ENCODE measurements at regions of chr4 and their contacts with region 1.

Region 1: GRCh38 chr4:182938205-182938645 is 21.0 kb upstream of the DCTD start:
- DNase-seq: peak; percentile 77
- H3K4me3 Mint-ChIP-seq: no peak overlapping the region
- H3K27ac Mint-ChIP-seq: no peak overlapping the region
- H3K4me1 Mint-ChIP-seq: peaks cover 17% of the 10 kb centered on the region
- H3K27me3 Mint-ChIP-seq: peaks cover 19% of the 10 kb centered on the region
- CTCF ChIP-seq: peak; percentile 95

Region 2: DNA sequence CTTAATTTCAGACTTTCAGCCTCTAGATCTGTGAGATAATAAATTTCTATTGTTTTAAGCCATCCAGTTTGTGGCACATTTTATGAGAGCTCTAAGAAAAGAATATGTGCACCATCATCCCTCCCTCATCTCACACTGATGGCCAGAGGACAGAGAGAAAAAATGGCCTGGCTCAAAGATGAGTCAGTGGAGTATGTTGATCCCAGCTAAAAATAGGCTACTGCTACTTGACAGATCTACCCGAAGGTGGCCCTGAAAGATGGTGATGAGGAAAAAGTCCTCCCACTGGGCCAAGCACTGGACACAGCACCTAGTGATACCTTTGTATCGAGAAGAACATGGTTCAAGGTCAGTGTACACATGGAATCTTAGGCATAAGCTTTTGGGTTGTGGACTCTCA is 17.2 kb after region 1 on chr4:
- CTCF ChIA-PET with region 1: interaction called, 57 read pairs
- POLR2A ChIA-PET with region 1: no interaction called
- intact Hi-C with region 1: no loop called
- DNase-seq: no peak
- H3K4me3 Mint-ChIP-seq: no peak overlapping the region
- H3K27ac Mint-ChIP-seq: no peak overlapping the region
- H3K4me1 Mint-ChIP-seq: no peaks in the 10 kb centered on the region
- H3K27me3 Mint-ChIP-seq: no peaks in the 10 kb centered on the region
- CTCF ChIP-seq: no peak

Region 3: DNA sequence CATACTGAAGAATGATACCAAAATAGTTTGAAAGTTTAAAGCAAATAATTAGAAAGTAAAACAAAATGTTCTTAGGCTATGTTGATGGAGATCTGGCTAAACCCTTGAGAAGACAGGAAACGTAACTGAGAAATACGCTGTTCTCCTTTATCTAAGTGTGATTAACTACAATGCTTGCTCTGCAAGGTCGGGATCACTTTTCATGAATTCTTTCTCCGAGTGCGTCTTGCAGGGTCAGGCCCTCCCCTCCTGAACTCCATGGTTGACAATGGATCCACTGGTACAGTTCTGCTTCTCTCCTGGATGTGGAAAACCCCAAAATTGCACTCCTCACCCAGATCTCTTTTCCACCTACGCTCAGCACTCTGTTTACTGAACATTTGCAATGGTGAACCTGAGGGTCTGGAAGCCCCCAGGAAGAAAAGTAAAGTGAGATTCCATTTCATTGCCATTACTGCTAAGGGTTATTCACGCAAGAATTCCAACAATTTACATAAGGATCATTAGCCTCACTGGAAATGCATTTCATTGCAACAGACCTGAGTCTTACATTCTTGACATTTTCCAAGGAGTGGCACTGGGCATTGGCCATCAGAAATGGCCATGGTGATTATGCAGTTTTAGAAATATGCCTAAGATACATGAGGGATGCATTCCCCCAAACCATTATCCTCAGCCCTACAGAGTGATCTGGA is 136.2 kb after region 1 on chr4:
- CTCF ChIA-PET with region 1: interaction called, 88 read pairs
- POLR2A ChIA-PET with region 1: no interaction called
- intact Hi-C with region 1: loop called (anchors 1 kb)
- DNase-seq: no peak
- H3K4me3 Mint-ChIP-seq: no peak overlapping the region
- H3K27ac Mint-ChIP-seq: no peak overlapping the region
- H3K4me1 Mint-ChIP-seq: no peaks in the 10 kb centered on the region
- H3K27me3 Mint-ChIP-seq: no peaks in the 10 kb centered on the region
- CTCF ChIP-seq: no peak

Region 4: DNA sequence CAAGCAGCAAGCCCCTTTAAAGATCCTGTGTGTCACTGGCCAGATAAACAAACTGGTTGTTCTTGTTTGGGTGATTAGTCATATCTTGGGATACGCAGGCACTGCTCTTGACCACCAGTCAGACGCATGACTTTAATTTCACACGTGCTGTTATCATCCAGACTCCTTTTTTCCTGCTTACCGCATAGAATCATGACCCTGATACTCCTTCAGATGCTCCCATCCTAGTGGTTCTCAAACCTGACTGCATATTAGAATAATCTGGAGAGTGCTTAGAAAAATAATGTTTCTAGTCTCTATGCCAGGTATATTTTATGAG is 303.1 kb after region 1 on chr4:
- CTCF ChIA-PET with region 1: interaction called, 18 read pairs
- POLR2A ChIA-PET with region 1: no interaction called
- intact Hi-C with region 1: no loop called
- DNase-seq: peak; percentile 22
- H3K4me3 Mint-ChIP-seq: no peak overlapping the region
- H3K27ac Mint-ChIP-seq: no peak overlapping the region
- H3K4me1 Mint-ChIP-seq: peaks cover 8% of the 10 kb centered on the region
- H3K27me3 Mint-ChIP-seq: no peaks in the 10 kb centered on the region
- CTCF ChIP-seq: no peak

Region 5: DNA sequence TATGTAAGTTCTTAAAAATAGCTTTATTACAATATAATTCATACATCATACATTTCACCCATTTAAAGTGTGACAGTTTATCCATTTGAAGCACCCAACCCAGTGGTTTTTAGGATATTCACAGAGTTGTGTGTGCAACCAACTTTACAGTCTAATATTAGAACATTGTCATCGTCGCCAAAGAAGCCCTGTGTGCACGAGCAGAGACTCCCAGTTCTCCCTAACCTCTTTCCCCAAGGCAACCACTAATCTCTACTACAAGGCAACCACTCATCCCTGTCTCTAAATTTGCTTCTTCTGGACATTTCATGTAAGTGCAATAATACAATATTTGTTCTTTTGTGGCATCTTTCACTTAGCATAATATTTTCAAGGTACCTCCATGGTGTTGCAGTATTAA is 334.2 kb after region 1 on chr4:
- CTCF ChIA-PET with region 1: interaction called, 11 read pairs
- POLR2A ChIA-PET with region 1: no interaction called
- intact Hi-C with region 1: no loop called
- DNase-seq: no peak
- H3K4me3 Mint-ChIP-seq: no peak overlapping the region
- H3K27ac Mint-ChIP-seq: no peak overlapping the region
- H3K4me1 Mint-ChIP-seq: no peaks in the 10 kb centered on the region
- H3K27me3 Mint-ChIP-seq: no peaks in the 10 kb centered on the region
- CTCF ChIP-seq: no peak